Left lung (tissue), 14 donors: ENCODE measurements at regions of chr4 and their contacts with region 1.

Region 1: DNA sequence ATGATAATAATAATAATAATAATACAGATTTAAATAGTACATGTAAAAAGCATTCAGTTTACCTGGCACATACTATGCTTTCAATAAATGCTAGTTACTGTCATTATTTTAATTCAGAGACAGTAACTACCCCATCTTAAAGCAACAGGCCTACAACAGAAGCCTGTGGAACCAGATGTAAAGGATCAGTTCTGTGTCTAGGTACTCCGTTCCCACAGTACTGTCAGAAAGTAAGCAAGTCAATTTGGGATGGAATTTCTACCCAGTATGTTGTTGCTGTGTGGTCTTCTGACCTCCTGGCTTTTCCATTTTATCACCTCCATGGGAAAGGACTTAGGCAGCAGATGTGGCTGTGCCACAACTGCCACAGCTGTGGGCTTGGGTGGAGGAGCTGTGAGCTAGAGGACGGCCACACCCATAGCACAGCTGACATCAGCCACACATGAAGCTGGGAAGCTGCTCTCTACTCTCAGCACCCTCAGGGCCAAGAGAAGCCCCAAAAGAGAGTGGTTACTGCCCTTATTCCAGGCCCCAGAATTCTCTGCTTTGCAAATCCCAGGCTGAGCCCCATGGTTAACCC is 102.8 kb downstream of the CBR4 start:
- DNase-seq: no peak
- ATAC-seq: peak; percentile 33
- H3K4me3 ChIP-seq: no peak overlapping the region
- H3K27ac ChIP-seq: peak overlapping the region in 1 of 2 donors; percentile 47
- H3K4me1 ChIP-seq: no peaks in the 10 kb centered on the region
- H3K27me3 ChIP-seq: no peaks in the 10 kb centered on the region
- CTCF ChIP-seq: no peak

Region 2: GRCh38 chr4:168514249-168514852 is 392.9 kb before region 1 on chr4:
- intact Hi-C with region 1: loop called in 1 of 2 experiments (anchors 10 kb)
- DNase-seq: peak in 2 of 4 donors; percentile 32 to 41
- ATAC-seq: peak; percentile 42
- H3K4me3 ChIP-seq: no peak overlapping the region
- H3K27ac ChIP-seq: no peak overlapping the region
- H3K4me1 ChIP-seq: peaks cover 0 to 23% of the 10 kb centered on the region in 2 donors
- H3K27me3 ChIP-seq: no peaks in the 10 kb centered on the region
- CTCF ChIP-seq: peak; percentile 15 to 26

Region 3: GRCh38 chr4:169179609-169180521 is 272.7 kb after region 1 on chr4:
- intact Hi-C with region 1: no loop called
- DNase-seq: peak in 2 of 4 donors; percentile 43 to 55
- ATAC-seq: peak; percentile 87
- H3K4me3 ChIP-seq: no peak overlapping the region
- H3K27ac ChIP-seq: peak overlapping the region in 1 of 2 donors; percentile 47
- H3K4me1 ChIP-seq: peaks cover 6 to 19% of the 10 kb centered on the region in 2 donors
- H3K27me3 ChIP-seq: no peaks in the 10 kb centered on the region
- CTCF ChIP-seq: no peak